Activated naive CD4-positive, alpha-beta T cell treated with anti-CD3 and anti-CD28 coated beads for 36 hours (primary cell): ENCODE measurements at regions of chr1 and their contacts with region 1.

Region 1: DNA sequence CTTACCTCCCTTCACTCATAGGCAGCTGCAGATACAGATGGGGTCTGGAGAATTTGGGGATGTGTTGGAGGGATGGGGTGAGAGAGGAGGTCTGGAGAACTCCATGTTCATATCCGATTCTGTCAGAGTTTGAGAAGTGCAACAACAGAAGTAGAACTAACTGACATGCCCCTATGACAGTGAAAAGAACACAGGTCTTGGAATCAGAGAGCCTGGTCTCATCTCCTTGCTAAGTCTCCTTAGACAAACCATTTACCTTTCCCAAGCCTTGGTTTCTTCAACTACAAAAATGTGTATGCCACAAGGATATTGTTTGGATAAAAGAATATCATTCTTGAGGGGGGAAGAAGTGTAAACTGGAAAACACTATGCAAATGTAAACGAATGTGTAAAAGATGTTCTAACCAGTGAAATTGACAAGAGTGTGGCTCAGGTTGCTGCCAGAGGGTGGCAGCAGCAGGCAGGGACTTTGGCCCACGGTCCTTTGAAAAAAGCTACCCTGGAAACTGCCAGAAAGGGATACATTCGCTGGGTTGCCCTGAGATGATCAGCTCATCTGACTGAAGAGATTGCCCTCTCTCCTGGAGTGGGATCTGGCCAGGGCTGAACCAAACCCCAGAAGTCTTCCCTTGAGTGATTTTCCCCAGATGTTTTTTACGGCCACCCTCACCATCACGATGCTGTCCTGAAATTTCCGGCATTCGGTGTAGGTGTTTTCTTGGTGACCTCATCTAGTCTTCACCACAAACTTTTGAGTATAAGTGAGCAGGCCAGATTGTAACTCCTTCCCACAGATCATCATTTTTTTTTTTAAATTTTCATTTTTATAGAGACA is 17.0 kb upstream of the CD2 start:
- DNase-seq: peak; percentile 84
- H3K4me3 Mint-ChIP-seq: peak overlapping the region; percentile 71
- H3K27ac Mint-ChIP-seq: peak overlapping the region; percentile 100
- H3K4me1 Mint-ChIP-seq: peaks cover 61% of the 10 kb centered on the region
- H3K27me3 Mint-ChIP-seq: no peaks in the 10 kb centered on the region

Region 2: GRCh38 chr1:116570358-116571200 is 166.7 kb before region 1 on chr1 and contains the start of gene CD58:
- CTCF ChIA-PET with region 1: no interaction called
- intact Hi-C with region 1: loop called (anchors 1 kb)
- DNase-seq: peak; percentile 80
- H3K4me3 Mint-ChIP-seq: peak within 1 kb of the TSS; percentile 81
- H3K27ac Mint-ChIP-seq: peak within 1 kb of the TSS; percentile 38
- H3K4me1 Mint-ChIP-seq: peaks cover 39% of the 10 kb centered on the region
- H3K27me3 Mint-ChIP-seq: peaks cover 7% of the 10 kb centered on the region
- total RNA-seq, gene CD58: 3.9 to 4.2 TPM

Region 3: GRCh38 chr1:116763787-116764465 is 26.7 kb after region 1 on chr1:
- CTCF ChIA-PET with region 1: interaction called, 96 read pairs
- intact Hi-C with region 1: loop called (anchors 1 kb)
- DNase-seq: peak; percentile 68
- H3K4me3 Mint-ChIP-seq: peak overlapping the region; percentile 100
- H3K27ac Mint-ChIP-seq: peak overlapping the region; percentile 100
- H3K4me1 Mint-ChIP-seq: peaks cover 87% of the 10 kb centered on the region
- H3K27me3 Mint-ChIP-seq: no peaks in the 10 kb centered on the region

Region 4: GRCh38 chr1:116817582-116818064 is 80.4 kb after region 1 on chr1:
- CTCF ChIA-PET with region 1: interaction called, 43 read pairs
- intact Hi-C with region 1: loop called (anchors 1 kb)
- DNase-seq: peak; percentile 91
- H3K4me3 Mint-ChIP-seq: no peak overlapping the region
- H3K27ac Mint-ChIP-seq: peak overlapping the region; percentile 98
- H3K4me1 Mint-ChIP-seq: peaks cover 66% of the 10 kb centered on the region
- H3K27me3 Mint-ChIP-seq: no peaks in the 10 kb centered on the region

Region 5: DNA sequence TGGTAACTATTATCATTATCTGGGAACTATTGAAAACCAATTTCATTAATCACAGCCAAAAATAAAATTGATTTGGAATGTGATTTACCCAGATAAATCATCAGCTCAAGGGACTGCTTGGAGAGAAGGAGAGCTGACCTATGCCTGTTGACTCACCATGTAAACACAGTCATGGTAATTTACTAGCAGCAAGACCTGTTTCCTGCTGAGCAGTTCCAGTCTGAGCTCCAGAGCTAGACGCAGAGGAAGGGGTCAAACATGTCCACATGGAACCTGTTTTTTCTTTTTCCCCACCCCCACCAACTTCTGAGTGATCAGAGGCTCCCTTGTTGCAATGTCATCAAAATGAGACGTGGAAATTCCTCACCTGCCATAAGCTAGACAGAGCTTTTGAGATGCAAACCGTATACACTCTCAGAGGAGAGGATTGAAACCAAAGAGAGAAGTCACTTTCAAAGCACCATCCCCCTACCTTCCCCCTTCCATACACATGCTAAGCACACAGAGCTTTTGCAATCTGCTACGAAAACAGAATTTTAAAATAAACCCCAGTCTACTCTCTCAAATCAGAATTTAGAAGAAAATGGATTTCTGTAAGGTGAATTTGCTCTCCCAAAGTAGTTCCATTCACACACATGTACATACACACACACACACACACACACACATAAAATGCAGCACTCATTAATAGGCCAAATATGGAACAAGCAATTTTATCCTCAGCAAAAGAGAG is 116.6 kb after region 1 on chr1:
- CTCF ChIA-PET with region 1: interaction called, 11 read pairs
- intact Hi-C with region 1: no loop called
- DNase-seq: peak; percentile 45
- H3K4me3 Mint-ChIP-seq: no peak overlapping the region
- H3K27ac Mint-ChIP-seq: peak overlapping the region; percentile 60
- H3K4me1 Mint-ChIP-seq: peaks cover 36% of the 10 kb centered on the region
- H3K27me3 Mint-ChIP-seq: no peaks in the 10 kb centered on the region

Region 6: GRCh38 chr1:116987256-116987555 is 250.0 kb after region 1 on chr1:
- CTCF ChIA-PET with region 1: interaction called, 6 read pairs
- intact Hi-C with region 1: loop called (anchors 1 kb)
- DNase-seq: peak; percentile 83
- H3K4me3 Mint-ChIP-seq: peak overlapping the region; percentile 68
- H3K27ac Mint-ChIP-seq: peak overlapping the region; percentile 91
- H3K4me1 Mint-ChIP-seq: peaks cover 60% of the 10 kb centered on the region
- H3K27me3 Mint-ChIP-seq: no peaks in the 10 kb centered on the region

Region 7: DNA sequence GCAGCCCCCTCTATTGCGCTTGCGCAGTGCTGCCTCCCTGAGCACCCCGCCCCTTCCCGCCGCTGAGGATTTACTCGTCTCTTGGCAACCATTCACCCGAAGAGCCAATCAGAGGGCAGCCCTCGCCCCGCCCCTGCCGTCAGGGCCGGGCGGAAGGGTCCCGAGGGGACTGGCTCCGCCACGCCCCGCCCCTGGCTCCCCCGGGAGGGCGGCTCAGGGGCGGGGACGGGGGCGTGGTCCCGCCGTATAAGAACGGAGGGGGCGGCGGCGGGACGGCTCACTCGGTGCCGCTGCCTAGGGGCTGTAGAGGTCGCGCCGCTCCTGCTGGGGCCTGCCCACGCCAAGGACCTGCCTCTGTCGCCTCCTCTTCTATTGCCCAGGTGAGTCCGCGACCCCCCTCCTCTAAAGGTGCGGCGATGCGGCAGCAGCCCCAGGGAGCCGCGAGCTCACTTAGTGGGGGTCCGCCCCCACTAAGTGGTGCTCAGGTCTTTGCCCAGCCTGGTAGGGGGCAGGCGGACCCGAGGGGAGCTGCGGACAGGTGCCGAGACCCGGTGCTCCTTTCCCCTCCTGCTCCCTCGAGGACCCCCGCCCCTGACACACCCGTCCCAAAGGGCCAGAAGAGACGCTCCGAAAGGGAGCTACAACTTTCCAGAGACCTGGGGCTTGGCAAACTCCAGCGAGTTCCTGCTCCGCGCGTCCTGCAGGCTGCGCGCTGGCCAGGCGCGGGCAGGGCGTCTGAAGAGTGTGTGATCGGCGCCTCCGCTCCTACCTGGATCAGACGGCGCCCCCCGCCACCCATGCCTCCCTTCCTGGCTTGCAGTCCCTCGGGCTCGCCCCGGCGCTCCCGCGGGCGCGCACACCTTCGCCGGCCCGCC is 868.8 kb after region 1 on chr1 and contains the start of gene TENT5C:
- CTCF ChIA-PET with region 1: no interaction called
- intact Hi-C with region 1: loop called (anchors 10 kb)
- DNase-seq: peak; percentile 98
- H3K4me3 Mint-ChIP-seq: peak within 1 kb of the TSS; percentile 86
- H3K27ac Mint-ChIP-seq: peak within 1 kb of the TSS; percentile 78
- H3K4me1 Mint-ChIP-seq: peaks cover 22% of the 10 kb centered on the region
- H3K27me3 Mint-ChIP-seq: peaks cover 2% of the 10 kb centered on the region
- total RNA-seq, gene TENT5C: 10.7 to 11.2 TPM